Natural killer cell (primary cell): ENCODE measurements at regions of chr17 and their contacts with region 1.

Region 1: GRCh38 chr17:80737106-80738019 is 192.7 kb downstream of the RPTOR start:
- DNase-seq: no peak
- ATAC-seq: peak in 1 of 3 donors; percentile 42
- H3K4me3 ChIP-seq: no peak overlapping the region
- H3K4me3 Mint-ChIP-seq: no peak overlapping the region
- H3K27ac ChIP-seq: peak overlapping the region; percentile 65
- H3K27ac Mint-ChIP-seq: peak overlapping the region; percentile 29 to 89
- H3K4me1 ChIP-seq: peaks cover 24% of the 10 kb centered on the region
- H3K4me1 Mint-ChIP-seq: peaks cover 19 to 50% of the 10 kb centered on the region in 2 donors
- H3K27me3 ChIP-seq: no peaks in the 10 kb centered on the region
- H3K27me3 Mint-ChIP-seq: no peaks in the 10 kb centered on the region
- CTCF ChIP-seq: no peak

Region 2: DNA sequence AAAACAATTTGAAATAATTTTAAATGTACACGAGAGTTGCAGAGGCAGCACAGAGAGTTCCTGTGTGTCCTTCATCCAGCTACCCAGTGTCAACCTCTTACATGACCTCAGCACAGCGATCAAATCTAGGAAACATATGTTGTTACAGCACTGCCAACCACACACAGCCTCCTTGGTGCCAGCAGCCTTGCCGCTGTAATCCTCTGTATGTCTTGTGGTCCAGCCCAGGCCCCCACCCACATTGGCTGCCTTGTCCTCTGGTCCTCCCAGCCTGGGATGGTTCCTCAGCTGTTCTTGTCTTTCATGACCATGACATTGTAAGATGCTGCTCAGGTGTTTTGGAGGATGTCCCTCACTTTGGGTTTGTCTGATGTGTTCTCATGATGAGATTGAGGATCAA is 14.7 kb before region 1 on chr17:
- intact Hi-C with region 1: loop called (anchors 2 kb)
- DNase-seq: no peak
- ATAC-seq: peak in 1 of 3 donors; percentile 23
- H3K4me3 ChIP-seq: no peak overlapping the region
- H3K4me3 Mint-ChIP-seq: no peak overlapping the region
- H3K27ac ChIP-seq: peak overlapping the region; percentile 4
- H3K27ac Mint-ChIP-seq: peak overlapping the region; percentile 62 to 69
- H3K4me1 ChIP-seq: peaks cover 23% of the 10 kb centered on the region
- H3K4me1 Mint-ChIP-seq: peaks cover 30 to 61% of the 10 kb centered on the region in 2 donors
- H3K27me3 ChIP-seq: no peaks in the 10 kb centered on the region
- H3K27me3 Mint-ChIP-seq: no peaks in the 10 kb centered on the region
- CTCF ChIP-seq: no peak

Region 3: GRCh38 chr17:80780381-80781198 is 43.2 kb after region 1 on chr17:
- intact Hi-C with region 1: loop called (anchors 5 kb)
- DNase-seq: peak in 1 of 2 donors; percentile 57
- ATAC-seq: peak; percentile 62 to 77 (median 68)
- H3K4me3 ChIP-seq: no peak overlapping the region
- H3K4me3 Mint-ChIP-seq: peak overlapping the region; percentile 70
- H3K27ac ChIP-seq: peak overlapping the region; percentile 59
- H3K27ac Mint-ChIP-seq: peak overlapping the region; percentile 2 to 80
- H3K4me1 ChIP-seq: peaks cover 41% of the 10 kb centered on the region
- H3K4me1 Mint-ChIP-seq: peaks cover 31 to 42% of the 10 kb centered on the region in 2 donors
- H3K27me3 ChIP-seq: no peaks in the 10 kb centered on the region
- H3K27me3 Mint-ChIP-seq: no peaks in the 10 kb centered on the region
- CTCF ChIP-seq: no peak

Region 4: DNA sequence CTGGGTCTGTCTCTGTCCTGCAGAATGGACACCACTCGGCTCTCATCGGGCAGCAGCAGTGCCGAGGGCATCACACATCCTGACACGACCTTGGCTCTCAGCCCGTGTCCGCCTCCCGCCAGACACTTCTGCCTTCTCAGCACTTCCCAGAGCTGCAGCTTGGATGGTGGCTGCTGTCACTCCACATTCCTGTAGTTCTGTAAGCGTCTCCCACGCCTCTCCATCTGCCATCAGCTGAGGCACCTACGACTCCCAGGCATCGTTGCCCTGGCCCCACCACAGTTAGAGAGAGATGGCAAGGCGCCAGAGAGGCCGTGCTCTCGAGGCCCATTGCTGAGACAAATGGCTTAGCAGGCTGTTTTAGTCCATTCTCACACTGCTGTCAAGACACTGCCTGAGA is 58.4 kb after region 1 on chr17:
- intact Hi-C with region 1: no loop called
- DNase-seq: no peak
- ATAC-seq: no peak
- H3K4me3 ChIP-seq: no peak overlapping the region
- H3K4me3 Mint-ChIP-seq: no peak overlapping the region
- H3K27ac ChIP-seq: no peak overlapping the region
- H3K27ac Mint-ChIP-seq: no peak overlapping the region
- H3K4me1 ChIP-seq: peaks cover 3% of the 10 kb centered on the region
- H3K4me1 Mint-ChIP-seq: peaks cover 2 to 7% of the 10 kb centered on the region in 2 donors
- H3K27me3 ChIP-seq: no peaks in the 10 kb centered on the region
- H3K27me3 Mint-ChIP-seq: no peaks in the 10 kb centered on the region
- CTCF ChIP-seq: no peak